ENCODE measurements at regions of chr22 and their contacts with region 1.

Region 1: DNA sequence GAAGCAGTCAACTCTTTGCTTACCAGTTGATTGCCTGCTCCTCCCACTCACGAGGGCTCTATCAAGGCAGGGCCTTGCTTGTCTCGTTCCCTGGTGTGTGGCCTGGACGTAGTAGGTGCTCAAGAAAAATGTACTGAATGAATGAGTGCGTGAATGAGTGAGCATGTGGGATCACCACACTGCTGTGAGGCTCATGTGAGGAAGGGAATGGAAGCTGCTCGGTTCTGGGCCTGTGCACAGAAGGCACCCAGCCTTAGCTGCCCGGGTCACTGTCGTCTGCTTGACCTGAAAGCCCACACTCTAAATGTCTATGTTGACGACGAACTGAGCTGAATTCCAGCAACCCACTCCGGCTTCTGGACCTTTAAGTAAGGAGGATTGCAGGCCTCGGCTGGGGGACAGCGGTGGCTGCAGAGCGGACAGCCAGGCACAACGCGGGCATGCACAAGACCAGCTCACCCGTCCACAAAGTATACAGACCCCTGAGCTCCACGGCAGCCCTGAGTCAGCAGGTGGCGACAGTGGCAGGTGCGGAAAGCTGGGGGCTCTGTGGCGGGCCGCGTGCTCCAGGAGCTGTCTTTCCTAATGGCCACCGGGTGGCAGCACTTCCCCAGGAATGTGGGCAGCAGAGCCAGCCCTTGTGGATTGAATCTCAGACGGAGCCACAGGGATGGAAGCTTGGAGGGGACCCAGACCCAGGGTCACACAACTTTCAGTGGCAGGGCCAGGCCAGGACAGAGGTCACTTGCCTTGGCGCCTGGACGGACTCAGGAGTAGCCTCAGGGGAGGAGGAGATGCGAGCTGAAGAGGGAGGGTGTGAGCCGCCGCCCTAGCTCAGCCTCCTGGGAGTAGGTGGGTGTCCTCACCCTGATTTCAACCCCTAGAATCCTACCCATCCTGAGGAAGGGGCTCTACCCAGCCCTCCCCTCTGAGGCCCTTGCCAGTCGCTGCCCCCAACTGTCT is 5.0 kb upstream of the PICK1 start:
- DNase-seq: peak; percentile 89
- H3K4me3 ChIP-seq: no peak overlapping the region
- H3K27ac ChIP-seq: peak overlapping the region in 2 of 4 donors; percentile 22 to 29
- H3K4me1 ChIP-seq: peaks cover 0 to 16% (median 6%) of the 10 kb centered on the region in 4 donors
- H3K27me3 ChIP-seq: no peaks in the 10 kb centered on the region
- CTCF ChIP-seq: peak; percentile 84 to 91 (median 86)
- EP300 ChIP-seq: no peak
- POLR2A ChIP-seq: no peak

Region 2: DNA sequence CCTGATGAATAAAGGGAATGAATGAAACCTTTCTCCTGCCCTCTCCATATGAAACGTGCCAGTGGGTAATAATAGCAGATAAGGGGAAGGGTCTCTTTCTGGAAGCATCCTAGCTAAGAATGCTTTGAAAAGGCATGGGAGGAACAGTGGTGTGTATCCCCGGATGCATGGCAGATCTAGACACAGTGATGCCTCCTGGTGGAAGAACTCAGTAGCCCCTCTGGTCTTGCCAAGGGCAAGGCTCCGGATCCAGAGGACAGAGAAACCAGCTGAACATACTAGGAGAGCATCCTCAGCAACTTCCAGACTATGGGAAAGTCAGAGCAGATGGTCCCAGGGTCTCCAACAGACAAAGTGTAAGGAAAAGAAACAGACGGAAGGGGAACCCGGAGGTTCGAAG is 51.9 kb after region 1 on chr22:
- intact Hi-C with region 1: loop called (anchors 5 kb)
- DNase-seq: no peak
- H3K4me3 ChIP-seq: no peak overlapping the region
- H3K27ac ChIP-seq: no peak overlapping the region
- H3K4me1 ChIP-seq: no peaks in the 10 kb centered on the region
- H3K27me3 ChIP-seq: no peaks in the 10 kb centered on the region
- CTCF ChIP-seq: peak; percentile 16 to 48 (median 36)
- EP300 ChIP-seq: no peak
- POLR2A ChIP-seq: no peak

Region 3: GRCh38 chr22:38214256-38215056 is 162.3 kb after region 1 on chr22:
- intact Hi-C with region 1: no loop called
- DNase-seq: peak; percentile 83
- H3K4me3 ChIP-seq: peak overlapping the region in 3 of 4 donors; percentile 21 to 38 (median 35)
- H3K27ac ChIP-seq: peak overlapping the region; percentile 27 to 55 (median 43)
- H3K4me1 ChIP-seq: peaks cover 0 to 39% (median 35%) of the 10 kb centered on the region in 4 donors
- H3K27me3 ChIP-seq: no peaks in the 10 kb centered on the region
- CTCF ChIP-seq: peak in 2 of 4 experiments; percentile 24 to 25
- EP300 ChIP-seq: no peak
- POLR2A ChIP-seq: no peak

Region 4: DNA sequence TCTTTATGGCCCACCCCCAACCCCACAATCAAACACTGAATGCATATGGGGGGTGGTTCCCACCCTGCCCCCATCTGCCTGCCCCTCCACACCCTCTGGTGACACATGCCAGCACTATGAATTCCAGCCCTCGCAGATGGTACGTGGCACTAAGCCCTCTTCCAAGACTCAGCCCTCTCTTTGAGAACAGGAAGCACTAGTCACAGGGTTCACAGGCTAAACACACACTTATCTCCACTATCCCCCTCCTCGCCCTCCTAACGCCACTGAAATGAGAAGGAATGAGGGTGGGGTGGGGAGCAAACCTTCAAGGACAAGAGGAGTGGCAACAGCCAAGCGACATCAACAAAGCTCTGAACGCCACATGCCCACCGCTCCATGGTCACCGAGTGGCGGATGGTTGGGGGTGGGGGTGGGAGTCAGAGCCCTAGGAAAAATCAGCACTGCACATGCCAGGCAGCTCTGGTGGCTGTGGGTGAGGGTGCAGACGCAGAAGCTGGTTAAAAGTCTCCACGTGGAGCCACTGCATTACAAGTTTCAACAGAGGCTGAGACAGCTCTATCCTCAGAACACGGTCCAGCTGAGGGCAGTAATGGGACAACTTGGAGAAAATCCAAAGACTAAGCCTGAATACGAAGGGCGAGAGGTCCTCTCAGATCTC is 187.1 kb after region 1 on chr22:
- intact Hi-C with region 1: loop called (anchors 5 kb)
- DNase-seq: no peak
- H3K4me3 ChIP-seq: no peak overlapping the region
- H3K27ac ChIP-seq: peak overlapping the region; percentile 58 to 74 (median 64)
- H3K4me1 ChIP-seq: peaks cover 0 to 46% (median 30%) of the 10 kb centered on the region in 4 donors
- H3K27me3 ChIP-seq: no peaks in the 10 kb centered on the region
- CTCF ChIP-seq: peak in 1 of 4 experiments; percentile 24
- EP300 ChIP-seq: no peak
- POLR2A ChIP-seq: no peak

Region 5: DNA sequence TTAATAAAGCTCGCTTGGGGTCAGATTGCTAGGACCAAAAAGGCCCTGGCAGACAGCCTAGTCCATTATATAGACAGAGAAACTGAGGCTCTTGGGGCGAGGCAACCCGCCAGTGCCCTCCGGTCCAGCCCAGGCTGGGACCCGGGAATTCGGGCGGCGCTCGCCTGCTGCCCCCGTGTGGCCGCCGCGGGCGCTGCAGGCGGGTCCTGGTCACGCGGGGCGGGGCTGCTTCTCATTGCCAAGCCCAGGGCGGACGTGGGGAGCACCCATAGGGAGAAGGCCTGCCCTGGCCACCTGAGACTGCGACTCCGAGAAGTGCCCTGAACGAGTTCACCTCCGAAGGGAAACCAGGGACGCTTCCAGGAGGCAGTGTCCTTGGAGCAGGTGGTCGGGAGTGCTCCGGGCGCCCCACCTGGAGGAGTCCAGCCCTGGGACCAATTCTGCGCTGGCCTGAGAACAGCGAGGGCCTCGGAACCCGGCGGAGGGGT is 301.0 kb after region 1 on chr22:
- intact Hi-C with region 1: loop called (anchors 2 kb)
- DNase-seq: peak; percentile 80
- H3K4me3 ChIP-seq: no peak overlapping the region
- H3K27ac ChIP-seq: peak overlapping the region in 1 of 4 donors; percentile 14
- H3K4me1 ChIP-seq: peaks cover 0 to 7% (median 4%) of the 10 kb centered on the region in 4 donors
- H3K27me3 ChIP-seq: no peaks in the 10 kb centered on the region
- CTCF ChIP-seq: peak; percentile 92 to 98 (median 96)
- EP300 ChIP-seq: no peak
- POLR2A ChIP-seq: no peak

Region 6: DNA sequence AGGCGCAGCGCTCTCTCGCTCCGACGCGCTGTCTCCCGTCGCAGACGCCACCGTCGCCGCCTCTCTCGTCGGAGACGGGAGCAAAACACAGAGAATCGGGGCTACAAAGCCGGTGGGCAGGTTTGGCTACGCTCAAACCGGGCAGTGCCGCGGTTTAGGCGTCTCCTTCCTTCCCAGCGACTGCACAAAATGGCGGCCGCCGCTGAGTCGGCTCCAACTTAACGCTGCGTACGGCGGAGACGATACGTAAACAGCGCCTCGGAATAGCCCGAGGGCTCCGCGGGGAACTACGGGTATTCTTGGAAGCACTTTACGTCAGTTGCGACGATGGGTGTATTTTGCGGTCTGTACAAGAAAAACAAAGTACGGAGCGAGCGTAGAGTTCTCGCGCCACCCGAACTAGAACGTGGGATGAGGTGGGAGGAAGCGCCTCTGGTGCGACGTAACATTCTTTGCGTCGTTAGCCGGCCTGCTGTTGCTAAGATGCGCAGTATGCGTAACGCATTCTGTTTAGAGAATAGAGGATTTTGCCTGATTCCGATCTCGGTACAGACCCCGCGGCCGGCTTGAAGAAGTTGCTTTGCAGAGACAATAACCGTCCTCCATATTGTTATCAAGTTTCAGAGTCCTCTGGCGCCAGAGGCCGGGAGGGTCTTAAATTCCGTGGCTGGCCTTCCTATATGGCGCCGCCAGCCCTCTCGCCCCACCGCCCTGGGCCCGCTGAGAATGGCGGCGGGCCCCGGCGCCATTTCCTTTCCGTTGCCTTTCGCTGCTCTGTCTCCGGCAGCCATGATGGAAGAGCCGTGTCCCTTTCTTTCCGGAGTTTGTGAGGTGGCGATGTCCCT is 454.2 kb after region 1 on chr22 and contains the start of gene DDX17:
- intact Hi-C with region 1: loop called (anchors 10 kb)
- DNase-seq: peak; percentile 98
- H3K4me3 ChIP-seq: peak within 1 kb of the TSS; percentile 73 to 94 (median 90)
- H3K27ac ChIP-seq: peak within 1 kb of the TSS; percentile 98 to 100 (median 99)
- H3K4me1 ChIP-seq: peaks cover 0 to 46% (median 45%) of the 10 kb centered on the region in 4 donors
- H3K27me3 ChIP-seq: no peaks in the 10 kb centered on the region
- CTCF ChIP-seq: peak in 1 of 4 experiments; percentile 10
- EP300 ChIP-seq: no peak
- POLR2A ChIP-seq: peak; percentile 41 to 64
- total RNA-seq, gene DDX17: 504 to 630 (median 591) TPM